Mammary epithelial cell (primary cell): ENCODE measurements at regions of chr3 and their contacts with region 1.

Region 1: DNA sequence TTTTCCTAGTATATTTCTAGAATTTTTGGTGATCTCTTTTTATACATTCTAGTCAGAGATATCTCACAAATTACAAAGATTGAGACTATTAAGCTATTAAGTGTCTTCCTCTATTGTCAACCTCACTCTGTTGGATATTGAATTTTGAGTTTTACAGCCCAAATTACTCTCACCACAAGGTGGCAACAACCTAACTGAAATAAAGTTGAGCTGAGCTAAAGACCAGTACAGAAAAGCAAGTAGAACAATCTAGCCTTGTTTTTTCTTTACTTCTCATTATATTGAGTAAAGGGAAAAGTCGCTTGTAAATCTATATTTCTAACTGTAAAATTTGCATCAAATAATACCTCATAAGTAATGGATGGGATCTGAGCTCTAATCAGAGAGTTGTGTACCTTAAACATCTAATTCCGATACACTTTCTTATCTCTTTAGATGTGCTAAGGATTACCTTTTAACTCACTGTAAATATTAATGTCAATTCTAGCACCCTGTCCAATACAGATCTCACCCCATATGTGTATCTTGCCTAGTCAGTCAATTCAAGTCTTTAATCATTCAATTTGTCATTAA is 13.6 kb upstream of the COMMD2 start:
- DNase-seq: peak; percentile 21
- H3K4me3 ChIP-seq: no peak overlapping the region
- H3K27ac ChIP-seq: no peak overlapping the region
- H3K4me1 ChIP-seq: no peaks in the 10 kb centered on the region
- H3K27me3 ChIP-seq: no peaks in the 10 kb centered on the region
- CTCF ChIP-seq: peak; percentile 37 to 62

Region 2: GRCh38 chr3:149812606-149813366 is 46.9 kb after region 1 on chr3 and contains the start of gene RNF13:
- CTCF ChIA-PET with region 1: interaction called, 36 read pairs
- dilution Hi-C with region 1: no loop called
- in situ Hi-C with region 1: no loop called
- intact Hi-C with region 1: loop called (anchors 1 kb)
- DNase-seq: peak; percentile 88
- H3K4me3 ChIP-seq: peak within 1 kb of the TSS; percentile 43 to 64 (median 62)
- H3K27ac ChIP-seq: peak within 1 kb of the TSS; percentile 95
- H3K4me1 ChIP-seq: peaks cover 41% of the 10 kb centered on the region
- H3K27me3 ChIP-seq: no peaks in the 10 kb centered on the region
- CTCF ChIP-seq: no peak
- total RNA-seq, gene RNF13: 39.7 to 105 TPM